ENCODE measurements at regions of chr2 and their contacts with region 1.

Region 1: DNA sequence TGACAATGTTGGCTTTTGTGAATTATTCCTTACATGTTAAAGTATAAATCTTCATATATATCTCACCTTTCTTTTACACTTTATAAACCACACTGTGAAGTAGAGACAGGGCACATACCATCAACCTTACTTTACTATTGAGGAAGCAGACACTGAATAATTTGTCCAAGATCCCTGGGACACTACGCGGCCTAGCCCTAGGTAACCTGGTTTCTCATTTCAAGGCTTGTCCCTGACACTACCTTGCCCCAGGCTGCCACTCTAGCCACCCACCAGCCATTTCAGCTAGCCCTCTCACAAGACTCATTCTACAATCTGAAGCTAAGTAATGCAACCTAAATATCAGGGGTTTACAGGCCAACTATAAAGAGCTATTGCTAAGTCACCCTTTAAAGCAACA is 26.7 kb downstream of the CCDC93 start:
- DNase-seq: no peak
- ATAC-seq: no peak
- H3K4me3 ChIP-seq: no peak overlapping the region
- H3K27ac ChIP-seq: no peak overlapping the region
- H3K4me1 ChIP-seq: no peaks in the 10 kb centered on the region
- H3K27me3 ChIP-seq: no peaks in the 10 kb centered on the region
- CTCF ChIP-seq: no peak

Region 2: GRCh38 chr2:118003396-118003824 is 16.3 kb after region 1 on chr2:
- CTCF ChIA-PET with region 1: no interaction called
- POLR2A ChIA-PET with region 1: no interaction called
- in situ Hi-C with region 1: no loop called
- intact Hi-C with region 1: no loop called
- DNase-seq: peak; percentile 56
- ATAC-seq: peak; percentile 95
- H3K4me3 ChIP-seq: no peak overlapping the region
- H3K27ac ChIP-seq: no peak overlapping the region
- H3K4me1 ChIP-seq: no peaks in the 10 kb centered on the region
- H3K27me3 ChIP-seq: no peaks in the 10 kb centered on the region
- CTCF ChIP-seq: peak; percentile 89

Region 3: GRCh38 chr2:118459424-118459823 is 472.3 kb after region 1 on chr2:
- CTCF ChIA-PET with region 1: no interaction called
- POLR2A ChIA-PET with region 1: interaction called, 13 read pairs
- in situ Hi-C with region 1: no loop called
- intact Hi-C with region 1: no loop called
- DNase-seq: no peak
- ATAC-seq: no peak
- H3K4me3 ChIP-seq: no peak overlapping the region
- H3K27ac ChIP-seq: no peak overlapping the region
- H3K4me1 ChIP-seq: no peaks in the 10 kb centered on the region
- H3K27me3 ChIP-seq: no peaks in the 10 kb centered on the region
- CTCF ChIP-seq: no peak